MCF 10A (cell line): ENCODE measurements at regions of chr6 and their contacts with region 1.

Region 1: DNA sequence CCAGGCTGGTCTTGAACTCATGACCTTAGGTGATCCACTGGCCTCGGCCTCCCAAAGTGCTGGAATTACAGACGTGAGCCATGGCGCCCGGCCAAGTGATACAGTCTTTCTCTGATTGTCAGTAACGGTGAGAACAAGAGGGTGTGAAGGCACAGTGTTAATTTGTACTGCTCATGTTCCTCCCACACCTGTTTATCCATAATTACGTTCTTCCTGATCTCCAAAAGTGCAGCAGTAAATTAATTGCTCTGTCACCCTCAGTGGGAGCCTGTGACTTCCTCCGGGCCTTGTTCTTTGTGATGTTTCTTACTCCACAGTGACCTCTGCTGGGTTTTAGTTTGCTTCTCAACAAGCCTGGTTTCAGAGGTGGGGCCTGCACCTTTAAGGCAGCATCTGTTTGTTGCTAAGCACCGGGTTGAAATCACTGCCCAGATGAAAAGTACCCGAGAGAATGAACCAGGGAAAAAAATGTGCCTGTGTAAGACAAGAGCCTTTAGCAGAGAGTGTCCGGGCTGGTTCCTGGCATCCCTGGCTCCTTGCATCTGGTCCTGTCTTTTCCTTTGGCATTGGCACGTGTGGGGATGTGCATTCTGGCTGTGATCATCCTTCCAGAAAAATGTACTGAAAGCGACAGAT is 89.1 kb upstream of the CLDN20 start:
- DNase-seq: peak; percentile 89
- H3K4me3 Mint-ChIP-seq: no peak overlapping the region
- H3K27ac Mint-ChIP-seq: no peak overlapping the region
- H3K4me1 Mint-ChIP-seq: peaks cover 26% of the 10 kb centered on the region
- H3K27me3 Mint-ChIP-seq: no peaks in the 10 kb centered on the region
- CTCF ChIP-seq: peak; percentile 65

Region 2: GRCh38 chr6:154733012-154733625 is 441.6 kb before region 1 on chr6 and contains the start of gene SCAF8:
- CTCF ChIA-PET with region 1: no interaction called
- POLR2A ChIA-PET with region 1: no interaction called
- intact Hi-C with region 1: loop called (anchors 5 kb)
- DNase-seq: peak; percentile 79
- H3K4me3 Mint-ChIP-seq: peak within 1 kb of the TSS; percentile 97
- H3K27ac Mint-ChIP-seq: peak within 1 kb of the TSS; percentile 98
- H3K4me1 Mint-ChIP-seq: peaks cover 12% of the 10 kb centered on the region
- H3K27me3 Mint-ChIP-seq: no peaks in the 10 kb centered on the region
- CTCF ChIP-seq: peak; percentile 69
- total RNA-seq, gene SCAF8: 41.0 and 49.2 TPM in 2 replicates

Region 3: GRCh38 chr6:154868143-154868594 is 306.5 kb before region 1 on chr6:
- CTCF ChIA-PET with region 1: interaction called, 15 read pairs
- POLR2A ChIA-PET with region 1: interaction called, 6 read pairs
- intact Hi-C with region 1: loop called (anchors 1 kb)
- DNase-seq: peak; percentile 66
- H3K4me3 Mint-ChIP-seq: no peak overlapping the region
- H3K27ac Mint-ChIP-seq: no peak overlapping the region
- H3K4me1 Mint-ChIP-seq: peaks cover 5% of the 10 kb centered on the region
- H3K27me3 Mint-ChIP-seq: no peaks in the 10 kb centered on the region
- CTCF ChIP-seq: peak; percentile 49

Region 4: DNA sequence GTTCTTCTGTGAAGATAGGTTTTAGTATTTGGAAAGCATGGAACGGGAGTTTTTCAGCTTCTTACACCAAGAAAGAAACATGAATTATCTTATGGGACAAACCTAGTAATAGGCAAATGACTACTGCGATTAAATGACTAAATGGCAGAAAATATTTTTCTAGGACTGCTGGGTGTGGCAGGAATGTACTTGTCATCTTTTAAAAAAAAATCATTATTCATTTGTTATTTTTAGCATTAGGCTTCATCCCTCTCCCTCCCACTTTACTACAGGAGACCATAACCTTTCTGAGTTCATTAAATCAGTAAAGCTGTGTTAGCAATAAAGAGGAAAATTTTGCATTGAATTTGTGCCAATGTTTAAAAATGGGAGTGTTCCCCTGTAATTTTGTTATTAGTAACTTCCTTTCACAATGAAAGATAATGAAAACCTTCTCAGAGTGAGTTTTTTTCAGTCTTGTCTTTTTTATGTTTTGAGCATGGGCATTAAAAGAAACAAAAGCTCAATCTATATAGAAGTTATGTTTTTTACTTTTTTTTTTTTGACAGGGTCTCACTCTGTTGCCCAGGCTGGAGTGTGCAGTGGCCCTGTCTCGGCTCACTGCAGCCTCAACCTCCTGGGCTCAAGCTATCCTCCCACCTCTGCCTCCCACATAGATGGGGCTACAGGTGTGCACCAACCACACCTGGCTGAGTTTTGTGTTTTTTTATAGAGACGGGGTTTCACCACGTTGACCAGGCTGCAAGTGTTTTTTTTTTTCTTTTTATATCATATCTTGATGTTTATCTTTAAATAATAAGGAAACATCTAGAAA is 16.5 kb before region 1 on chr6:
- CTCF ChIA-PET with region 1: interaction called, 5 read pairs
- POLR2A ChIA-PET with region 1: interaction called, 18 read pairs
- intact Hi-C with region 1: no loop called
- DNase-seq: no peak
- H3K4me3 Mint-ChIP-seq: no peak overlapping the region
- H3K27ac Mint-ChIP-seq: peak overlapping the region; percentile 80
- H3K4me1 Mint-ChIP-seq: peaks cover 44% of the 10 kb centered on the region
- H3K27me3 Mint-ChIP-seq: no peaks in the 10 kb centered on the region
- CTCF ChIP-seq: no peak

Region 5: DNA sequence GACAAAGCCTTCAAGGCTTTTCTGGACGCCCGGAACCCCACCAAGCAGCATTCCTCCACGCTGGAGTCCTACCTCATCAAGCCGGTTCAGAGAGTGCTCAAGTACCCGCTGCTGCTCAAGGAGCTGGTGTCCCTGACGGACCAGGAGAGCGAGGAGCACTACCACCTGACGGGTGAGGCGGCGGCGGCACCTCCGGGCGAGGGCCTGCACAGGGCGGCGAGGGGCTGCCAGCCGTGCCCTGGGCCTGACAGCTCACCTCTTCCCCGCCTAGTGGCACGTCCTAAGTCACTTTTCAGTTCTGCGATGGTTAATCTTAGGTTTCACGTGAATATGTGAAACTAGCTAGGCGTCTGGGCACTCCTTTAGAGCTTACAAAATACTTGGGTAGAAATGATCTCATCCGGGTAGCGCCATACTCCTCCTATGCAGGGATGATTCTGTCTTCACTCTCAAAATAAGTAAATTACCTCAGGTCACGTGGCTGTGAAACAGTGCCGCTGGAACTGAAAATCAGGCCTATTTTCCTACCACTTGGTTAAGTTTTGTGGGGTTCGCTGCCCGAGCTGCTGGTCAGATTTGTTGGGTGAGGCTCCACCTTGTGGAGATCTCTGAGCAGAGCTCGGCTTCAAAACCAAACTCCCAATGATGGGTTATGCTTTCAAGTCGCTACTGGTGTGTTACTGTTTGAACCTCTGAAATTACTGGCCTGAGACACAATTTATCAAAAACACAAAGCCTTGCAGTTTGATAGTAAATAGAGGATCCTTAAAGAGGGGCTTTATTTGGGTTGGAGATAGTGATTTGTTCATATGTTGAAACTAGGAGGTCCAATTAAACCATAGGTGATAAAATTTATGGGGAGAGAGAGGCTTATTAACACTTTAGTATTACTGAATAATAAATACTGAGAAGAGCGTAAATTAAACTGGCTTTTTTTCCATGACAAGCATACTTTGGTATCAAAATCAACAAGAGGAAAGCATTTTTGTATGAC is 73.6 kb after region 1 on chr6:
- CTCF ChIA-PET with region 1: interaction called, 54 read pairs
- POLR2A ChIA-PET with region 1: interaction called, 15 read pairs
- intact Hi-C with region 1: loop called (anchors 1 kb)
- DNase-seq: peak; percentile 54
- H3K4me3 Mint-ChIP-seq: no peak overlapping the region
- H3K27ac Mint-ChIP-seq: peak overlapping the region; percentile 71
- H3K4me1 Mint-ChIP-seq: no peaks in the 10 kb centered on the region
- H3K27me3 Mint-ChIP-seq: no peaks in the 10 kb centered on the region
- CTCF ChIP-seq: peak; percentile 62

Region 6: GRCh38 chr6:155314092-155314772 is 139.5 kb after region 1 on chr6 and contains the start of gene TFB1M:
- CTCF ChIA-PET with region 1: interaction called, 3 read pairs
- POLR2A ChIA-PET with region 1: interaction called, 9 read pairs
- intact Hi-C with region 1: loop called (anchors 5 kb)
- DNase-seq: peak; percentile 98
- H3K4me3 Mint-ChIP-seq: peak within 1 kb of the TSS; percentile 79
- H3K27ac Mint-ChIP-seq: peak within 1 kb of the TSS; percentile 97
- H3K4me1 Mint-ChIP-seq: peaks cover 8% of the 10 kb centered on the region
- H3K27me3 Mint-ChIP-seq: no peaks in the 10 kb centered on the region
- CTCF ChIP-seq: no peak
- total RNA-seq, gene TFB1M: 26.8 and 31.0 TPM in 2 replicates